ENCODE measurements at regions of chr1 and their contacts with region 1.

Region 1: DNA sequence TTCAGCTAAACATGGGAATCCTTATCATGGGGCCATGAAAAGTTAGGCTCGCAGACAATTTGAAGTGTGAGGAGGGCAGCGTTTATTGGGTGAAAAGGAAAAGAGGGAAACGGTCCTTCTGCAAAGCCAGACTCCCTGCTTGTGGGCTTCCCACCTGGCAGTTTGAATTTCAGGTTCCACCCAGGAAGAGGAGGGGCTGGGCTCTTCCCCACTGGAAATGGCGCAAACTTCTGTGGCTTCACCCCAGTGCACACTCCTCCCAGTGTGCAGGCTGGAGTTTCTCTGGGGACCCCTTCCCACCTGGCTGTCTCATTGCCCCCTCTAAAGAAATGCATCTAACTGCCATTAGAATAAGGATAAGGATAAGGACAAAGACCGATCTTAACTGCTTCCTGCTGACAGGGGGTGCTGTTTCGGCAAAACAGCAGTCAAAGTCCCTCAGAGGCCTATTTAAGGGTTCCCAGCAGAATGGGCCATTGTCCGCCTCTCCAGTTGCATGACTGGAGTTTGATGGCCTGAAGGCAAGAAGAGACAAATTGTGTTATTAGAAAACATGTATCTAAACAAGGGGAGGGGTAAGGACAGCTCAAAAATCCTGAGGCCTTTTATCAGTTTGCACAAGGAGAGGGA is 20.4 kb downstream of the AIM2 start:
- DNase-seq: no peak
- H3K4me3 ChIP-seq: peak overlapping the region in 1 of 3 experiments; percentile 23
- H3K4me3 Mint-ChIP-seq: peak overlapping the region in 1 of 2 donors; percentile 44
- H3K27ac ChIP-seq: peak overlapping the region; percentile 15 to 69
- H3K27ac Mint-ChIP-seq: peak overlapping the region; percentile 18 to 82 (median 69)
- H3K4me1 ChIP-seq: peaks cover 49 to 60% of the 10 kb centered on the region in 2 donors
- H3K4me1 Mint-ChIP-seq: peaks cover 60% of the 10 kb centered on the region
- H3K27me3 ChIP-seq: no peaks in the 10 kb centered on the region
- H3K27me3 Mint-ChIP-seq: no peaks in the 10 kb centered on the region
- CTCF ChIP-seq: no peak

Region 2: DNA sequence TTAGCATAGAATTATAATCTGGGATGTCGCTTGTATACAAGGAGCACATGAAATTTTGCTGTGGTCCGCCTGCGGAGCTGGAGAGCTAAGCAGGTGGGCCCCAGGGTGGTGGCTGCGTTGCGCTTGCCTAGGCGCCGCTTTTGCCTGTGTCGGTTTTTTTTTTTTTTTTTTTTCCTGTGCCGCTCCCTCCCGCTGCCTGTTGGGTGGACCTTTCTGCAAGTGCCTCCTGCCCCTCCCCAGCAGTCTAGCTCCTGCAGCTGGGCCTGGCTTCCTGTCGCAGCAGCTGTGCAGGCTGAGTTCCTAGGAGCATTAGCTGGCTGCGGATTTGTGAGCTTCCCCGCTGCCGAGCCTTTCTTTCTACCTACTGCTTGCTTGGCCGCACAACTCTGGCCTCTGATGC is 104.2 kb before region 1 on chr1:
- intact Hi-C with region 1: no loop called
- DNase-seq: no peak
- H3K4me3 ChIP-seq: no peak overlapping the region
- H3K4me3 Mint-ChIP-seq: no peak overlapping the region
- H3K27ac ChIP-seq: no peak overlapping the region
- H3K27ac Mint-ChIP-seq: no peak overlapping the region
- H3K4me1 ChIP-seq: peaks cover 0 to 7% of the 10 kb centered on the region in 2 donors
- H3K4me1 Mint-ChIP-seq: peaks cover 4% of the 10 kb centered on the region
- H3K27me3 ChIP-seq: peaks cover 0 to 2% of the 10 kb centered on the region in 2 donors
- H3K27me3 Mint-ChIP-seq: peaks cover 0 to 8% (median 3%) of the 10 kb centered on the region in 3 donors
- CTCF ChIP-seq: no peak

Region 3: DNA sequence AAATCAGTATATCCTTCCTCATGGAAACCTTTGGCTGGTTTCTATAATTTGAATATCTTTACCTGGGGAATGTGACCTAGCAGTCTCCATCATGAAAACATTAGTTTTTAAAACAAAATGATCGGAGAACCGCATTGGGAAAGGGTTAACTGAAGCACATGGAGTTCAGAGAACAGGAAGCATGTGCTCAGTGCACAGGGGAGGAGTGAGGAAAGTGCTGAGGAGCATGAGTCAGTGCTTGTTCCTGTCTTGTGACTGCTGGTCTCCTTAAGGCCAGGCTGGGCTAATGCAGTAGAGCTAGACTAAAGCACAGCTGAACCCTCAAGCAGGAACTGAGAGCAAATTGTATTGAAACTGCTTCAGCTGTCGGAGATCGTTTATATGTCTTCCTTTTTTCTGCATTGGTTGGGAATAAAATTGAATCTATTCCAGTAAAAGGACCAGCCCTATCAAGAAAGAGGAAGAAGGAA is 40.7 kb before region 1 on chr1:
- intact Hi-C with region 1: loop called in 1 of 2 experiments (anchors 5 kb)
- DNase-seq: peak; percentile 92 to 99 (median 97)
- H3K4me3 ChIP-seq: peak overlapping the region; percentile 12 to 95 (median 39)
- H3K4me3 Mint-ChIP-seq: peak overlapping the region; percentile 65 to 80
- H3K27ac ChIP-seq: peak overlapping the region; percentile 82 to 83
- H3K27ac Mint-ChIP-seq: peak overlapping the region; percentile 89 to 96 (median 95)
- H3K4me1 ChIP-seq: peaks cover 41 to 57% of the 10 kb centered on the region in 2 donors
- H3K4me1 Mint-ChIP-seq: peaks cover 54% of the 10 kb centered on the region
- H3K27me3 ChIP-seq: no peaks in the 10 kb centered on the region
- H3K27me3 Mint-ChIP-seq: no peaks in the 10 kb centered on the region
- CTCF ChIP-seq: no peak